Natural killer cell (primary cell): ENCODE measurements at regions of chr11 and their contacts with region 1.

Region 1: GRCh38 chr11:77776455-77776854 is 44.1 kb downstream of the RSF1 start:
- DNase-seq: peak in 1 of 2 donors; percentile 54
- ATAC-seq: no peak
- H3K4me3 ChIP-seq: no peak overlapping the region
- H3K4me3 Mint-ChIP-seq: no peak overlapping the region
- H3K27ac ChIP-seq: no peak overlapping the region
- H3K27ac Mint-ChIP-seq: peak overlapping the region in 1 of 2 donors; percentile 65
- H3K4me1 ChIP-seq: peaks cover 4% of the 10 kb centered on the region
- H3K4me1 Mint-ChIP-seq: peaks cover 47 to 50% of the 10 kb centered on the region in 2 donors
- H3K27me3 ChIP-seq: no peaks in the 10 kb centered on the region
- H3K27me3 Mint-ChIP-seq: no peaks in the 10 kb centered on the region
- CTCF ChIP-seq: peak; percentile 53

Region 2: GRCh38 chr11:77654770-77655434 is 121.6 kb before region 1 on chr11:
- intact Hi-C with region 1: no loop called
- DNase-seq: no peak
- ATAC-seq: no peak
- H3K4me3 ChIP-seq: no peak overlapping the region
- H3K4me3 Mint-ChIP-seq: no peak overlapping the region
- H3K27ac ChIP-seq: no peak overlapping the region
- H3K27ac Mint-ChIP-seq: no peak overlapping the region
- H3K4me1 ChIP-seq: no peaks in the 10 kb centered on the region
- H3K4me1 Mint-ChIP-seq: no peaks in the 10 kb centered on the region
- H3K27me3 ChIP-seq: no peaks in the 10 kb centered on the region
- H3K27me3 Mint-ChIP-seq: no peaks in the 10 kb centered on the region
- CTCF ChIP-seq: no peak

Region 3: GRCh38 chr11:78000193-78000592 is 223.7 kb after region 1 on chr11:
- intact Hi-C with region 1: loop called (anchors 1 kb)
- DNase-seq: peak in 1 of 2 donors; percentile 75
- ATAC-seq: peak; percentile 69 to 85 (median 76)
- H3K4me3 ChIP-seq: no peak overlapping the region
- H3K4me3 Mint-ChIP-seq: no peak overlapping the region
- H3K27ac ChIP-seq: no peak overlapping the region
- H3K27ac Mint-ChIP-seq: no peak overlapping the region
- H3K4me1 ChIP-seq: peaks cover 5% of the 10 kb centered on the region
- H3K4me1 Mint-ChIP-seq: peaks cover 2 to 7% of the 10 kb centered on the region in 2 donors
- H3K27me3 ChIP-seq: no peaks in the 10 kb centered on the region
- H3K27me3 Mint-ChIP-seq: peaks cover 0 to 15% of the 10 kb centered on the region in 2 donors
- CTCF ChIP-seq: peak; percentile 53